Activated T-helper 1 cell treated with anti-CD3 and anti-CD28 coated beads, Interleukin-12 subunit alpha, Interleukin-12 subunit beta, Interleukin-2, Interleukin-4 antibody, amounts not matched to agents 30 ng/mL and 10 ng/mL and 1 ng/mL, durations not matched to agents 14 hours and 24 hours and 36 hours (primary cell): ENCODE measurements at regions of chr16 and their contacts with region 1.

Region 1: GRCh38 chr16:31458844-31459721 is at the start of gene ARMC5:
- DNase-seq: peak; percentile 95
- H3K4me3 Mint-ChIP-seq: peak within 1 kb of the TSS; percentile 93
- H3K27ac Mint-ChIP-seq: peak within 1 kb of the TSS; percentile 95
- H3K4me1 Mint-ChIP-seq: peaks cover 41% of the 10 kb centered on the region
- H3K27me3 Mint-ChIP-seq: no peaks in the 10 kb centered on the region
- total RNA-seq, gene ARMC5: 11.2 and 12.7 TPM in 2 replicates

Region 2: GRCh38 chr16:31108035-31108793 is 350.9 kb before region 1 on chr16 and contains the start of gene BCKDK:
- intact Hi-C with region 1: loop called (anchors 2 kb)
- DNase-seq: peak; percentile 69
- H3K4me3 Mint-ChIP-seq: peak within 1 kb of the TSS; percentile 84
- H3K27ac Mint-ChIP-seq: peak within 1 kb of the TSS; percentile 86
- H3K4me1 Mint-ChIP-seq: peaks cover 22% of the 10 kb centered on the region
- H3K27me3 Mint-ChIP-seq: no peaks in the 10 kb centered on the region
- total RNA-seq, gene BCKDK: 43.6 and 44.8 TPM in 2 replicates

Region 3: GRCh38 chr16:31179747-31180459 is 279.2 kb before region 1 on chr16 and contains the start of gene FUS:
- intact Hi-C with region 1: loop called (anchors 1 kb)
- DNase-seq: peak; percentile 88
- H3K4me3 Mint-ChIP-seq: peak within 1 kb of the TSS; percentile 98
- H3K27ac Mint-ChIP-seq: peak within 1 kb of the TSS; percentile 99
- H3K4me1 Mint-ChIP-seq: peaks cover 54% of the 10 kb centered on the region
- H3K27me3 Mint-ChIP-seq: no peaks in the 10 kb centered on the region
- total RNA-seq, gene FUS: 950 and 955 TPM in 2 replicates

Region 4: GRCh38 chr16:31427441-31428278 is 31.4 kb before region 1 on chr16:
- intact Hi-C with region 1: loop called (anchors 2 kb)
- DNase-seq: peak; percentile 47
- H3K4me3 Mint-ChIP-seq: no peak overlapping the region
- H3K27ac Mint-ChIP-seq: no peak overlapping the region
- H3K4me1 Mint-ChIP-seq: peaks cover 42% of the 10 kb centered on the region
- H3K27me3 Mint-ChIP-seq: peaks cover 5% of the 10 kb centered on the region

Region 5: GRCh38 chr16:31487720-31488467 is 28.8 kb after region 1 on chr16:
- intact Hi-C with region 1: loop called (anchors 1 kb)
- DNase-seq: peak; percentile 59
- H3K4me3 Mint-ChIP-seq: peak overlapping the region; percentile 87
- H3K27ac Mint-ChIP-seq: no peak overlapping the region
- H3K4me1 Mint-ChIP-seq: no peaks in the 10 kb centered on the region
- H3K27me3 Mint-ChIP-seq: peaks cover 24% of the 10 kb centered on the region

Region 6: GRCh38 chr16:31713071-31713944 is 254.2 kb after region 1 on chr16:
- intact Hi-C with region 1: loop called (anchors 1 kb)
- DNase-seq: peak; percentile 86
- H3K4me3 Mint-ChIP-seq: peak overlapping the region; percentile 99
- H3K27ac Mint-ChIP-seq: peak overlapping the region; percentile 99
- H3K4me1 Mint-ChIP-seq: peaks cover 31% of the 10 kb centered on the region
- H3K27me3 Mint-ChIP-seq: no peaks in the 10 kb centered on the region